CD14-positive monocyte (primary cell): ENCODE measurements at regions of chr12 and their contacts with region 1.

Region 1: DNA sequence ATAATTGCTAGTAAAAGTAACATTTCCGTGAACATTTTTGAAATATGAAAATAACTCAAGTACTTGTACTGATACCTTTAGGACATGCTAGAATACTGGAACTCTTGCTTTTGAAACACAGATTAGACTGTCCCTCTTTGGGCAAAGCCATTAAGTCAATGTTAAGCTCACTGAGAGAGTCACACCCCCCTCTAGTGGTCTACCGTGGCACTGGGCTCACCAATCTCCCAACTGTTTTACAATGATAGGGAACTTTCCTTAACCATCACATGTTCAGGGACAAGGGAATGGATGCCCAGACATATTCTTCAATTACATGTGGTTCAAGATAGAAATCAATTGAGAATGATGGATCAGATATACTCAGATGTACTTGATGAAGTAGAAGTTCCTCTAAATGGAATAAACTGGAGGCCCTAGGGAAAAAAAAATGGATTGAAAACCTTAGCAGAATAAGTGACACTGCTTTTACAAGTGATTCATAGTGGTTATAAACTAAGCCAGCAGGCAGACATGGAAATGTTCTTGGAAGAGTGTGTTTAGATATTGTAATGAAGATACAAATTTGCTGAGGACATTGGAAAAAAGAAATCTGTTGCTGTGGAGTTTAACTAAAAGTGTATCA is 17.8 kb downstream of the NANOG start:
- DNase-seq: peak; percentile 38 to 71 (median 60)
- H3K4me3 ChIP-seq: no peak overlapping the region
- H3K4me3 Mint-ChIP-seq: no peak overlapping the region
- H3K27ac ChIP-seq: no peak overlapping the region
- H3K27ac Mint-ChIP-seq: no peak overlapping the region
- H3K4me1 ChIP-seq: no peaks in the 10 kb centered on the region
- H3K4me1 Mint-ChIP-seq: peaks cover 4% of the 10 kb centered on the region
- H3K27me3 ChIP-seq: no peaks in the 10 kb centered on the region
- H3K27me3 Mint-ChIP-seq: no peaks in the 10 kb centered on the region
- CTCF ChIP-seq: peak; percentile 96

Region 2: DNA sequence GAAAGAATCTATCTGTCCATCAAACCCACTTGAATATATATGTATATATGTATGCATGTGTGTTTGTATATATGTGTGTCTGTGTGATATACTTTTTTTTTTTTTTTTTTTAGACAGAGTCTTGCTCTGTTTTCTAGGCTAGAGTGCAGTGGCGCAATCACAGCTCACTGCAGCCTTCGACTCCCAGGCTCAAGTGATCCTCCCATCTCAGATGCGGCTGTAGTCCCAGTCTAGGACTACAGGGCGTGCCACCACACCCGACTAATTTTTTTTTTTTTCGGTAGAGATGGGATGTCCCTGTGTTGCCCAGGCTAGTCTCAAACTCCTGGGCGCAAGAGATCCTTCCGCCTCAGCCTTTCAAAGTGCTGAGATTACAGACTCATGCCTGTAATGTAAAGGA is 128.2 kb before region 1 on chr12:
- intact Hi-C with region 1: loop called in 1 of 2 experiments (anchors 10 kb)
- DNase-seq: no peak
- H3K4me3 ChIP-seq: no peak overlapping the region
- H3K4me3 Mint-ChIP-seq: no peak overlapping the region
- H3K27ac ChIP-seq: no peak overlapping the region
- H3K27ac Mint-ChIP-seq: no peak overlapping the region
- H3K4me1 ChIP-seq: peaks cover 15 to 31% of the 10 kb centered on the region in 2 donors
- H3K4me1 Mint-ChIP-seq: peaks cover 33% of the 10 kb centered on the region
- H3K27me3 ChIP-seq: no peaks in the 10 kb centered on the region
- H3K27me3 Mint-ChIP-seq: no peaks in the 10 kb centered on the region
- CTCF ChIP-seq: no peak

Region 3: GRCh38 chr12:7716381-7716780 is 90.6 kb before region 1 on chr12:
- intact Hi-C with region 1: no loop called
- DNase-seq: peak in 1 of 3 donors; percentile 19
- H3K4me3 ChIP-seq: no peak overlapping the region
- H3K4me3 Mint-ChIP-seq: no peak overlapping the region
- H3K27ac ChIP-seq: no peak overlapping the region
- H3K27ac Mint-ChIP-seq: no peak overlapping the region
- H3K4me1 ChIP-seq: peaks cover 24 to 25% of the 10 kb centered on the region in 2 donors
- H3K4me1 Mint-ChIP-seq: peaks cover 31% of the 10 kb centered on the region
- H3K27me3 ChIP-seq: no peaks in the 10 kb centered on the region
- H3K27me3 Mint-ChIP-seq: peaks cover 0 to 2% (median under 1%) of the 10 kb centered on the region in 3 donors
- CTCF ChIP-seq: no peak